BJ (cell line): ENCODE measurements at regions of chr17 and their contacts with region 1.

Region 1: GRCh38 chr17:47615766-47616424 is 33.8 kb upstream of the KPNB1 start:
- DNase-seq: no peak
- H3K4me3 ChIP-seq: no peak overlapping the region
- H3K27me3 ChIP-seq: no peaks in the 10 kb centered on the region
- CTCF ChIP-seq: peak; percentile 56

Region 2: DNA sequence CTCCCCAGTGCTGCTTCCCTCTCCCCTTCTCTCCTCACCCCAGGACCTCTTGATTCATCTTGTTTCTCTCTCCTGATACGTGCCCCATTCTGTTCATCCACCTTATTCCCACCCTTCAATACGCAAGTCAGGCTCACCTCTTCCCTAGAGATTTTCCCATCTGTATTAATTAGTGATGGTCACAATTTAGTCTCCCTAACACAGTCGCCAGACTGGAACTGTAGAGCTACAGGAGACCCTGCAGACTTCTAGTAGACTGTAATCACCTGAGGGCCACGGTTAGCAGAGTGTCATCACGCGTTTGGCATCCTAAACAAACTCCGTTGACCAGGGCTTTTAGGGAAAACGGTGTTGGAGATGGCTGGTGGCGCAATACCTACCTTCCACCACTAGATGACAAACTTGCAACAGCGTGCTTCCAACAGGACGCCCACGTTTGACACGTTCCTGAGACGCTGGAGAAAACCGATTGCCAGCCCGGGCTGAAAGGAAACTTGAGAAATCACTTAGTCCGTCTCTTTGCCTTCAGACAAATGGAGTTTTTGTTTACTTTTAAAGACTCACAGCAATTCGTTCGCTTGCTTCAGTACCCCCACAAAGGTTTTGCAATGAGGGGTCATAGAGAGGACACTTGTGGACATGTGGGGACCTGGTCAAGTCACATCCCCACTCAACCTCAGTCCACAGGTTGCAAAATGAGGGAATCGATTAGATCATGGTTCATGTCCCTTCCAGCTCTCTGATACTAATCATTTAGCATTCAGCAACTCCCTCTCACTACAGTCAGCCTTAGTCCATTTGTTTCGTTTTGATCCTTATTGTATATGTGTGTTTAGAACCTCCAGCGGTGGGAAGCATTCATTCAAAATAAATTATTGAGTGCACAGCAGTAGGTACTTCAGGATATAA is 386.1 kb before region 1 on chr17:
- CTCF ChIA-PET with region 1: interaction called, 11 read pairs
- POLR2A ChIA-PET with region 1: no interaction called
- DNase-seq: peak; percentile 64
- H3K4me3 ChIP-seq: no peak overlapping the region
- H3K27me3 ChIP-seq: no peaks in the 10 kb centered on the region
- CTCF ChIP-seq: peak; percentile 99

Region 3: GRCh38 chr17:47604598-47604927 is 11.3 kb before region 1 on chr17:
- CTCF ChIA-PET with region 1: interaction called, 34 read pairs
- POLR2A ChIA-PET with region 1: interaction called, 4 read pairs
- DNase-seq: no peak
- H3K4me3 ChIP-seq: no peak overlapping the region
- H3K27me3 ChIP-seq: no peaks in the 10 kb centered on the region
- CTCF ChIP-seq: no peak

Region 4: GRCh38 chr17:47698749-47699535 is 83.0 kb after region 1 on chr17:
- CTCF ChIA-PET with region 1: no interaction called
- POLR2A ChIA-PET with region 1: no interaction called
- DNase-seq: no peak
- H3K4me3 ChIP-seq: no peak overlapping the region
- H3K27me3 ChIP-seq: no peaks in the 10 kb centered on the region
- CTCF ChIP-seq: peak; percentile 97